ENCODE measurements at regions of chr21 and their contacts with region 1.

Region 1: DNA sequence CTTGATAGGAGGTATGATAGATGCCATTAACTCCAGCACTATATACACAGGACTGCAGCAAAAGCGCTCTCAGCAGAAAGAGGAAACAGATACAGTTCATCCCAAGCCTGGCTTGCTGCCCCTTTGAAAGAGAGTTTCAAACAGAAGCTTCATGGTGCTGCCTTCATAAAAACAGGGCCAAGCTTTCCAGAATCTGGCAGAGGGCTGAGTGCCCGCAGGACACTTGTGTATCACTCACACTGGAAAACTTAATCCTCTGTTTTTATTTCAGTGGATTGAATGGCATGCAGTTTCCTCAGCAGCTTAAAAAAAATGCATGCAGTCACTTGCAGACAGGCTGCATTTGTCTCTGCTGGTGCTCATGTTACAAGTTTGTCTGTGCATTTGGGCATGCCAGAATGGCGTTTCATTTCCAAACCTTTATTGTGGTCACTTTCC is 40.4 kb downstream of the KCNJ15 start:
- DNase-seq: no peak
- H3K4me3 ChIP-seq: no peak overlapping the region
- H3K27ac ChIP-seq: no peak overlapping the region
- H3K4me1 ChIP-seq: peaks cover 0 to 8% of the 10 kb centered on the region in 2 donors
- H3K27me3 ChIP-seq: no peaks in the 10 kb centered on the region
- CTCF ChIP-seq: no peak

Region 2: DNA sequence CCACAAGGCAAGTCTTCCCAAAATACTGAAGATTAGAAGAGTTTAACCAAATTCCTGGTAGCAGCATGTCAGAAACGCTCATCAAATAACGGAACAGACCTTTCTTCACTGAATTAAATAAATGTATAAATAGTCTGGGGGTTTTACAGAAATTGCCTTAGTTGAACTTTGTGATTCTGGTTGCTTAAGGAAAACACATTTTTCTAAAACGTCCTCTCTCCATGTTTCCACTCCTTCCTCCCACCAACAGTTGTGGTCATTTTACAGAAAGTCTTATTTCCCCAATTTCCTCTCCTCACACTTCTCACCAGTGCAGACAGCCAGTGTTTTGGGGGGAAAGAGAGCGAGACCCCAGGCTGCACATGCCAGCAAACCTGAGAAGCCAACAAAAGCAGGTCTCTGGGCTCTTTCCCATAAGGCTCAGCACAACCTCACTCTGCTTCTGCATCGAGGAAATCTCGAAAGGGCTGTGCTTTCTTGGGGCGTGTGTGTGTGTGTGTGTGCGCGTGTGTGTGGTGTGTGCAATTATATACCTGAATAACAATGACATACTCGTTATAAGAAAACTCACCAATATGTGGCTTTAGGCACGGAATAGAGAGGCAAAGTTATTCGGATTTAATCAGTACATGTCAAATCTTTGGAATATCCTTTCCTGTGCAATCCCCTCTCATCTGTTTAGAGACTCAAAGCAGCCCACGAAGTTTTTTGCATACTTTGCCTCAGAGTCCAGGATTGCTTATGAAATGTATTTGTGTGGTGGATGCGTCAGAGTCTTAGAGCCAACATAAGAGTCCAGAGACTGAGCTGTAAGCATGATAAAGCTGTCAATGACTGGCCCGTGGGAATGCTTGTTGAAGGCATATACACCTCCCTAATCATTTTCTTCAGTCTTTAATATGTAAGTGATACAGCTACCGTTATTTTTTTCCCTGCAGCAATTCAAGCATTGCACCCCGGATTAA is 38.4 kb before region 1 on chr21:
- intact Hi-C with region 1: loop called (anchors 5 kb)
- DNase-seq: no peak
- H3K4me3 ChIP-seq: no peak overlapping the region
- H3K27ac ChIP-seq: no peak overlapping the region
- H3K4me1 ChIP-seq: peaks cover 0 to 14% of the 10 kb centered on the region in 2 donors
- H3K27me3 ChIP-seq: no peaks in the 10 kb centered on the region
- CTCF ChIP-seq: no peak

Measured in ascending aorta (tissue), 2 donors.